PC-9 (cell line): ENCODE measurements at regions of chr9 and their contacts with region 1.

Region 1: GRCh38 chr9:81558091-81558830 is 131.1 kb downstream of the TLE1 start:
- DNase-seq: peak in 1 of 2 experiments; percentile 49
- H3K4me3 ChIP-seq: no peak overlapping the region
- H3K27ac ChIP-seq: peak overlapping the region; percentile 86
- H3K4me1 ChIP-seq: peaks cover 46% of the 10 kb centered on the region
- H3K27me3 ChIP-seq: no peaks in the 10 kb centered on the region
- CTCF ChIP-seq: no peak

Region 2: GRCh38 chr9:81032030-81032572 is 526.2 kb before region 1 on chr9:
- CTCF ChIA-PET with region 1: no interaction called
- POLR2A ChIA-PET with region 1: no interaction called
- intact Hi-C with region 1: loop called (anchors 1 kb)
- DNase-seq: no peak
- H3K4me3 ChIP-seq: no peak overlapping the region
- H3K27ac ChIP-seq: no peak overlapping the region
- H3K4me1 ChIP-seq: peaks cover 5% of the 10 kb centered on the region; the same call in 1 of the 2 replicates
- H3K27me3 ChIP-seq: no peaks in the 10 kb centered on the region
- CTCF ChIP-seq: no peak

Region 3: DNA sequence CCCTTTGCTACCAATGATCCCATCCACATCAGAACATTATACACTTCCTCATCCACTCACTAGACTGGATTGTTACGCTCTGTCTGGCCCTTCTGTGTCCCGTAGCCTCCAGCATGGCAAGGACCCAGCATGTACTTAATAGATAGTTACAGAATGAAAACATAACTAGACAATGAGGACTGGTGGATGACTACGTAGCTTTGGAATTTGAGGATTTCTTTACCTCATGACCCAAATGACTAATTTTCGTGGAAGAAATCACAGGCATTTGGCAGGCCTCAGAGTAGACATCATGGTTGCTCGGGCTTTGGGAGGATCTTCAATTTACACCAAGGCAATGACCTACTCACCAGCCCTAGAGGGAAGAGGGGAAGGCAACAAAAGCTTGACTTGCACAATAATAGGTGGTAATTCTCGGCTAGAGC is 168.7 kb before region 1 on chr9:
- CTCF ChIA-PET with region 1: no interaction called
- POLR2A ChIA-PET with region 1: interaction called, 6 read pairs
- intact Hi-C with region 1: loop called (anchors 1 kb)
- DNase-seq: peak; percentile 78 to 96
- H3K4me3 ChIP-seq: no peak overlapping the region
- H3K27ac ChIP-seq: peak overlapping the region; percentile 66
- H3K4me1 ChIP-seq: peaks cover 40% of the 10 kb centered on the region
- H3K27me3 ChIP-seq: no peaks in the 10 kb centered on the region
- CTCF ChIP-seq: no peak

Region 4: GRCh38 chr9:81529556-81530195 is 28.6 kb before region 1 on chr9:
- CTCF ChIA-PET with region 1: no interaction called
- POLR2A ChIA-PET with region 1: no interaction called
- intact Hi-C with region 1: loop called (anchors 2 kb)
- DNase-seq: peak; percentile 53 to 81
- H3K4me3 ChIP-seq: no peak overlapping the region
- H3K27ac ChIP-seq: peak overlapping the region; percentile 52
- H3K4me1 ChIP-seq: peaks cover 23% of the 10 kb centered on the region
- H3K27me3 ChIP-seq: no peaks in the 10 kb centered on the region
- CTCF ChIP-seq: no peak

Region 5: GRCh38 chr9:81537964-81538363 is 20.3 kb before region 1 on chr9:
- CTCF ChIA-PET with region 1: no interaction called
- POLR2A ChIA-PET with region 1: interaction called, 49 read pairs
- intact Hi-C with region 1: no loop called
- DNase-seq: no peak
- H3K4me3 ChIP-seq: no peak overlapping the region
- H3K27ac ChIP-seq: no peak overlapping the region
- H3K4me1 ChIP-seq: peaks cover 24% of the 10 kb centered on the region
- H3K27me3 ChIP-seq: no peaks in the 10 kb centered on the region
- CTCF ChIP-seq: no peak

Region 6: DNA sequence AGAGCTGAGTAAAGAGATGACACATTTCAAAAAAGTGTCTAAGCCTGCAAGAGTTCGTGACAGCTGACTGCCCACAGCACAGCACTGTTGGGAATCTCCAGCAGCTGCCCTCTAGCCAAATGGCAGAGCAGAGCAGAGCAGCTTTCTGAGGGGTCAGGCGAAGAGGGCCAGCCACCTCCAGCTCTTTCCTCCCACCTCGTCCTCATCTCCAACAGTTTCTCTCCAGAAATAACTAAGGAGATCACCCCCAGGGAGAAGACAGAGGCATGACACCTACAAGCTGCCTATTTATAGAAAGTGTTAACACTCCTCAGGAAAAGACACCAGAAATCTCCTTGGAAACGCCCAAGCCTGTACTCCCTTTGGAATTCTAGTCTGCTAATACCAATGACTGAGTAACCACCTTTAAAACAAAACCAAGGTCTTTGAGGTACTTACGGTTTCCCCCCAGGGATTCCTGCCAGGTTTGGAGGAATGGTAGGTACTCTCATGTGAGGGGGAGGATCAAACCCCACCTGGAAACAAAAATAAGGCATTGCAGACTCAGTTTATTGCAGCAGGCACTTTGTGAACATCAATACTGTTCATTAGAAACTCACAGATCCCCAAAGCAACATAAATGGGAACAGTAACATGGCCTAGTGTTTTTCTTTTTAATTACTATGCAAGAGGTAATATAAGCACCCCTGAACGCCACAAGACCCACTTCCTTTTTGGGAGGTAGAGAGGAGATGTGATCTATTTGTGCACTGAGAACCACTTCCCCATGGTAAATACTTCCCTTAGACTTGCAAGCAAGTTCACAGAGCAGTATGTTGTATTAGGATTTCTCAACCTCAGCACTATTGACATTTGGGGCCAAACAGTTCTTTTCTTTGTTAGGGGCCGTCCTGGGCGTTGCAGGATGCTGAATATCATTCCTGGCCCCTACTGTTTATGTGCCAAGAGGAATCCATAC is 51.8 kb after region 1 on chr9:
- CTCF ChIA-PET with region 1: no interaction called
- POLR2A ChIA-PET with region 1: no interaction called
- intact Hi-C with region 1: no loop called
- DNase-seq: no peak
- H3K4me3 ChIP-seq: no peak overlapping the region
- H3K27ac ChIP-seq: no peak overlapping the region
- H3K4me1 ChIP-seq: peaks cover 3% of the 10 kb centered on the region
- H3K27me3 ChIP-seq: no peaks in the 10 kb centered on the region
- CTCF ChIP-seq: no peak

Region 7: GRCh38 chr9:81699086-81699485 is 140.8 kb after region 1 on chr9:
- CTCF ChIA-PET with region 1: no interaction called
- POLR2A ChIA-PET with region 1: no interaction called
- intact Hi-C with region 1: no loop called
- DNase-seq: no peak
- H3K4me3 ChIP-seq: no peak overlapping the region
- H3K27ac ChIP-seq: no peak overlapping the region
- H3K4me1 ChIP-seq: no peaks in the 10 kb centered on the region
- H3K27me3 ChIP-seq: no peaks in the 10 kb centered on the region
- CTCF ChIP-seq: no peak

Region 8: GRCh38 chr9:81848472-81848871 is 290.2 kb after region 1 on chr9:
- CTCF ChIA-PET with region 1: no interaction called
- POLR2A ChIA-PET with region 1: no interaction called
- intact Hi-C with region 1: loop called (anchors 10 kb)
- DNase-seq: no peak
- H3K4me3 ChIP-seq: no peak overlapping the region
- H3K27ac ChIP-seq: no peak overlapping the region
- H3K4me1 ChIP-seq: peaks cover 20% of the 10 kb centered on the region
- H3K27me3 ChIP-seq: no peaks in the 10 kb centered on the region
- CTCF ChIP-seq: peak; percentile 54; the same call in 1 of the 2 replicates

Region 9: GRCh38 chr9:82532504-82533180 is 974.4 kb after region 1 on chr9:
- CTCF ChIA-PET with region 1: no interaction called
- POLR2A ChIA-PET with region 1: no interaction called
- intact Hi-C with region 1: loop called (anchors 5 kb)
- DNase-seq: no peak
- H3K4me3 ChIP-seq: no peak overlapping the region
- H3K27ac ChIP-seq: no peak overlapping the region
- H3K4me1 ChIP-seq: no peaks in the 10 kb centered on the region
- H3K27me3 ChIP-seq: no peaks in the 10 kb centered on the region
- CTCF ChIP-seq: peak; percentile 40; the same call in 1 of the 2 replicates